Naive thymus-derived CD4-positive, alpha-beta T cell (primary cell): ENCODE measurements at regions of chr17 and their contacts with region 1.

Region 1: DNA sequence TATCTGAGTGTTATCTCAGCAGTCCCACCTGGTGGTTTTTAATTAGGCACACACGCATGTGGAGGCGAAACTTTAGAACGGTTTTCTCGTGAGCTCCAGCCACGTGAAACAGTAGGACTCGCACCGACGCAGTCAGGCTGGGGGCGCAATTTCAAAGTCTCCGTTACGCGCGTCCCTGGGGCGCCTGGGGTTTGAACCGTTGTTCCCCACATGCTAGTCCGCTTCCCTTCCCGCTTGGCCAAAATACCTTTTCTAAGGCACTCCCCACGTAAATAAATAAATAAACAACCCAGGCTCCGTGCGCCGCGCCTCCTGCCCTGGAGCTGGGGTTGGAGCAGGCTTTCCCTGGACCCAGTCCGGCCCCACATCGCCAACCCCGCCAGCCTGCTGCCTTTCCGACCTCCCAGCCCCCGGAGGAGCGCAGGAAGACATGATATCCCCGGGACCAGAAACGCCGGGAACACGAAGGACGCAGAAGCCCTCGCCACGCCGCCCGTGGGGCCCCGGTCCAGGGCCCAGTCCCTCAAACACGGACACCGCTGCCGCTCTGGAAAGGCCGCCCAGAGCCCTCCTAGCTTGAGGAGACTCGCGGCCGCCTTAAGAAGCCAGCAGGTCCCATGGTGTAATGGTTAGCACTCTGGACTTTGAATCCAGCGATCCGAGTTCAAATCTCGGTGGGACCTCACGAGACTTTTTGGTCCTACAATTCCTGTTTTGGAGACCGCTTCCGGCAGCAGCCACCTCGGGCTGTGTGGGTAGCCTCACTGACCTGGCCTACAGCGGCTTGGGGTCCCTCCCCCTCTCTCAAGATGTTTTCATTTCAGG is 18.2 kb downstream of the GNGT2 start:
- DNase-seq: peak in 8 of 9 donors; percentile 75 to 96 (median 94)
- ATAC-seq: peak; percentile 71
- H3K4me3 ChIP-seq: peak overlapping the region; percentile 88
- H3K4me3 Mint-ChIP-seq: peak overlapping the region; percentile 84 to 98 (median 95)
- H3K27ac ChIP-seq: peak overlapping the region; percentile 87
- H3K27ac Mint-ChIP-seq: peak overlapping the region; percentile 96 to 99 (median 98)
- H3K4me1 ChIP-seq: peaks cover 6% of the 10 kb centered on the region in 2 donors
- H3K4me1 Mint-ChIP-seq: peaks cover 16 to 57% (median 27%) of the 10 kb centered on the region in 7 donors
- H3K27me3 ChIP-seq: no peaks in the 10 kb centered on the region
- H3K27me3 Mint-ChIP-seq: peaks cover 0 to 6% (median 0%) of the 10 kb centered on the region in 5 donors

Region 2: GRCh38 chr17:48107168-48108132 is 1084.7 kb before region 1 on chr17 and contains the start of gene SNX11:
- CTCF ChIA-PET with region 1: no interaction called
- POLR2A ChIA-PET with region 1: no interaction called
- intact Hi-C with region 1: loop called in 1 of 2 experiments (anchors 10 kb)
- DNase-seq: peak; percentile 85 to 97 (median 94)
- ATAC-seq: peak; percentile 96
- H3K4me3 ChIP-seq: peak within 1 kb of the TSS; percentile 97
- H3K4me3 Mint-ChIP-seq: peak within 1 kb of the TSS; percentile 92 to 99 (median 96)
- H3K27ac ChIP-seq: peak within 1 kb of the TSS; percentile 89
- H3K27ac Mint-ChIP-seq: peak within 1 kb of the TSS; percentile 89 to 96 (median 93)
- H3K4me1 ChIP-seq: peaks cover 19 to 20% of the 10 kb centered on the region in 2 donors
- H3K4me1 Mint-ChIP-seq: peaks cover 45 to 68% (median 62%) of the 10 kb centered on the region in 7 donors
- H3K27me3 ChIP-seq: no peaks in the 10 kb centered on the region
- H3K27me3 Mint-ChIP-seq: no peaks in the 10 kb centered on the region
- total RNA-seq, gene SNX11: 12.3 to 35.1 (median 16.7) TPM

Region 3: DNA sequence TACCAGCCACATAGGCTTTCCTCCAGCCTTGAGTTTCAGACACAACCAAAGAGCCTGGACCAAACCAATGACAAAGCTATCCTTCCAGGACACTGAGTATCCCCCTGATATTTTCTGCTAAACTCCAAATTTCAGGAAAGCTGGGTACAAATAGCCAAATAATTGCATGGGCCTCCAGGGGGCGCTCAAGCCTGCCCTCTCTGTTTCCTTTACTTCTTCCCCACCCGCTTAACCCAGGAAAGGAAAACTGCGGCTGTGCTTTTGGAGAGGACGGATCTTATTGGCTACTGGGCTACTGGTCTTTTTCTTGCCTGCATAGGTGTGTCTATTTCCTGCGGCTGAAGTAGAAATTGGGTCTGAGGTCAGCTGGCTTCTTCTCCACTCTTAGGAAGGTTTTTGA is 11.8 kb before region 1 on chr17:
- CTCF ChIA-PET with region 1: interaction called, 23 read pairs
- POLR2A ChIA-PET with region 1: interaction called, 9 read pairs
- intact Hi-C with region 1: loop called (anchors 1 kb)
- DNase-seq: peak; percentile 38 to 67 (median 58)
- ATAC-seq: peak; percentile 69
- H3K4me3 ChIP-seq: no peak overlapping the region
- H3K4me3 Mint-ChIP-seq: peak overlapping the region in 3 of 10 donors; percentile 16 to 42 (median 21)
- H3K27ac ChIP-seq: no peak overlapping the region
- H3K27ac Mint-ChIP-seq: peak overlapping the region in 1 of 9 donors; percentile 41
- H3K4me1 ChIP-seq: peaks cover 4% of the 10 kb centered on the region in 2 donors
- H3K4me1 Mint-ChIP-seq: peaks cover 0 to 5% (median 4%) of the 10 kb centered on the region in 7 donors
- H3K27me3 ChIP-seq: peaks cover 0 to 4% of the 10 kb centered on the region in 2 donors
- H3K27me3 Mint-ChIP-seq: peaks cover 0 to 8% (median 2%) of the 10 kb centered on the region in 5 donors

Region 4: GRCh38 chr17:49217651-49218413 is 25.7 kb after region 1 on chr17:
- CTCF ChIA-PET with region 1: interaction called, 6 read pairs
- POLR2A ChIA-PET with region 1: interaction called, 237 read pairs
- intact Hi-C with region 1: loop called (anchors 1 kb)
- DNase-seq: peak; percentile 41 to 84 (median 79)
- ATAC-seq: peak; percentile 87
- H3K4me3 ChIP-seq: no peak overlapping the region
- H3K4me3 Mint-ChIP-seq: peak overlapping the region; percentile 78 to 94 (median 84)
- H3K27ac ChIP-seq: peak overlapping the region; percentile 70
- H3K27ac Mint-ChIP-seq: peak overlapping the region; percentile 81 to 99 (median 92)
- H3K4me1 ChIP-seq: peaks cover 64 to 72% of the 10 kb centered on the region in 2 donors
- H3K4me1 Mint-ChIP-seq: peaks cover 56 to 74% (median 65%) of the 10 kb centered on the region in 7 donors
- H3K27me3 ChIP-seq: no peaks in the 10 kb centered on the region
- H3K27me3 Mint-ChIP-seq: no peaks in the 10 kb centered on the region

Region 5: DNA sequence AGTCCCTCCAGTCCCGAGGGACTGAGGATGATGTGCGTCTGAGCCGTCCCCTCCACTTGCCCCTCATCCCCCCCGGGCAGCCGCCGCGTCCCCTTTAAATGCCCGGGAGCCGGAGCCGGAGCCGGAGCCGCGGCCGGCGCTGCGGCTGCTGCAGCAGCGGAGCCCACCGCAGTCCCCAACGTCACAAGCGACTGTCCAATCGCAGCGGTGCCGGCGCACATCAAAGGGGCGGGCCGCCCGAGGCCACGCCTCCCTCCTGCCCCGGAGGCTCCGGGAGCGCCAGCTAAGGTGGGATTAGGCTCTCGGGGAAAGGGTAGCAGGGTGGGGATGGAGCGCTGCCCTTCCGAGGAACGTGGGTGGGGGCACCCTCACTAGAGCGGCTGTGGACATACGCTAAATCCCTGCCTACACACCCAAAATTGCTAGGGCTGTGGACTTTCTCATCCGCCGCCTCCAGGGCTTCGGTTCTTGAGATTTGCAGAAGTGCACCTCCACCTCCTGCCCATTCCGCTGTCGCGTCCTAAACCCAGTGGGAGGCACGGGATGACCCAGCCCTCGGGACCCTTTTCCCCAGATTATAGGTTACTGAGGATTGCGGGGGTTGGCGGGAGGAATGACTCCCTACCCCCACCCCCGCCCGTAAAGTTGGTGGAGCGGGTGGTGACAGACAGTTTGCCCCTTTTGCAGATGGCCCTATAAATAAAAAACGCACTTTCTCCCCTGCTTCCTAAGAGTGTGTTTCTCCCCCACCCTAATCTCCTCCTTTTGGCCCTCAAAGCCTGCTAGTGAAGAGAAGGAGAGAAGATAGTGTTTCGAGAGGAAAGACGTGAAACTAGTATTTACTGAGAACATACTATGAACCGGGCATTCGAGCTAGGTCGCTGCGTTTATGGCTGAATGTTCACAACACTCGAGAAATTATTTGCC is 38.8 kb after region 1 on chr17 and contains the start of gene PHOSPHO1:
- CTCF ChIA-PET with region 1: interaction called, 67 read pairs
- POLR2A ChIA-PET with region 1: interaction called, 80 read pairs
- intact Hi-C with region 1: loop called (anchors 1 kb)
- DNase-seq: peak; percentile 70 to 88 (median 83)
- ATAC-seq: peak; percentile 97
- H3K4me3 ChIP-seq: peak within 1 kb of the TSS; percentile 62
- H3K4me3 Mint-ChIP-seq: peak within 1 kb of the TSS; percentile 81 to 94 (median 86)
- H3K27ac ChIP-seq: no peak within 1 kb of the TSS
- H3K27ac Mint-ChIP-seq: peak within 1 kb of the TSS in 7 of 9 donors; percentile 36 to 80 (median 52)
- H3K4me1 ChIP-seq: peaks cover 11 to 12% of the 10 kb centered on the region in 2 donors
- H3K4me1 Mint-ChIP-seq: peaks cover 0 to 26% (median 16%) of the 10 kb centered on the region in 7 donors
- H3K27me3 ChIP-seq: no peaks in the 10 kb centered on the region
- H3K27me3 Mint-ChIP-seq: peaks cover 0 to 43% (median 4%) of the 10 kb centered on the region in 5 donors
- total RNA-seq, gene PHOSPHO1: 0.17 TPM in 1 of 5 experiments, not detected in the others

Region 6: DNA sequence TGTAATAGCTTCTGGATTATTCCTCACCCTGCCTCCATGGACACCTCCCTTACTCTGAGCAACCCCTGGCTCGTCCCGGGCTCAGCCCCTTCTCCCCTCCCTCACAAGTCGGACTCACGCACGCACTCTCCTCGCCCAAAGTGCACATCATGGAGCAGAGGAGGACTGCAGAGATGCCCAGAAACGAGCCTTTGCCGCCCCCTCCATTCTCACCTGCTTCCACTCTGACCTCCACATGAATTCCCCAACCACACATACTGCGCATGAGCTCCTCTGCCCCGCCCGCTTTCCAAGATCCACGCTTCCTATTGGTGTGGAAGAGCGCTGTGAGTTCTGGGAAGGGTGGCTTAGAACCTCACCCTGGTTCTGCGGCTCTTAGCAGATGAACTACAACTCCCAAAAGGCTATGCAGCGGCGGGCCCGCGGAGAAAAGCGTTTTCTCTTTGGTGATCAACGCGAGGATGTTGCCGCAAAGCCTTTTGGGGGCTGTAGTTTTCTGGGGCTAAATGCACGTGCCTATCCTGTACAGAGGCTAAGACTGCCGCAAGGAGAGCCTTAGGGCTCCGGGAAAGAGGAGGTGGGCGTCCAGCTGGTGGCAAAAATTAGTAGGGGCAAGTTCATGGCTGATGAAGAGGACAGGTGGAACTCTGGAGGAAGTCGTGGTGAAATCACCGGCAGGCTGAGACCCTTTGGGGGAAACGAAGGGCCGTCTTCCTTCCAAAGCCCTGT is 222.7 kb after region 1 on chr17 and contains the start of gene PHB1:
- CTCF ChIA-PET with region 1: no interaction called
- POLR2A ChIA-PET with region 1: no interaction called
- intact Hi-C with region 1: loop called (anchors 1 kb)
- DNase-seq: peak; percentile 75 to 98 (median 93)
- ATAC-seq: peak; percentile 99
- H3K4me3 ChIP-seq: peak within 1 kb of the TSS; percentile 77
- H3K4me3 Mint-ChIP-seq: peak within 1 kb of the TSS; percentile 92 to 99 (median 96)
- H3K27ac ChIP-seq: peak within 1 kb of the TSS; percentile 77
- H3K27ac Mint-ChIP-seq: peak within 1 kb of the TSS; percentile 78 to 99 (median 92)
- H3K4me1 ChIP-seq: peaks cover 8% of the 10 kb centered on the region in 2 donors
- H3K4me1 Mint-ChIP-seq: peaks cover 11 to 30% (median 26%) of the 10 kb centered on the region in 7 donors
- H3K27me3 ChIP-seq: no peaks in the 10 kb centered on the region
- H3K27me3 Mint-ChIP-seq: peaks cover 0 to 3% (median 0%) of the 10 kb centered on the region in 5 donors
- total RNA-seq, gene PHB1: 50.0 to 186 (median 54.4) TPM

Region 7: DNA sequence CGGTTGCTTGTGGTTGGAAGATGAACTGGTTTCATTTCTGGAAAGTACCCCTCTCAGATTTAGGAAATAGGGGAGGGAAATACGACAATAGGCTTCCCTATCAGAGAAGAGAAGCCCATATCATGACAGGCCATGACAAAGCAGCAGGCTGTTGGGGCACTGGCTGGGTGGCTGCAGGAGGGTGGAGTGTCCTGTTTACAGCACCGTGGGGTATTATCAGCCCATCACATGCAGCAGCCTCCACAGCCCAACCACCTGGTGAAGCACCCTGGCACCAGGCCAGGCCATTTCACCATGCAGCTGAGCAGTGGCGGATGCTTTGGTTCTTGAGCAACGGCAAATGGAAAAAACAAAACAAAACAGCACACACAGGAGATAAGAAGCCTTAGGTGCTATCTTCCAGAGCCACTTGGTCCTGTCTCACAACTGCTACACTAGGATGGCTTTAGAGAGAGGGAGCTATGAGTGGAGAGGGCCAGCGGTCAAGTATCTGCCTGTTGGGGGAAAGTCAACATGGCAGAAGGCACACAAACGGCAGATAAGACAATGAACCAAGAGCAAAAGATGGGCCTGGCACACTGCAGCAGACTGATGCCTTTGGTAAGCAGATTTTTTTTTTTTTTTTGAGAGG is 547.6 kb after region 1 on chr17:
- CTCF ChIA-PET with region 1: no interaction called
- POLR2A ChIA-PET with region 1: no interaction called
- intact Hi-C with region 1: loop called in 1 of 2 experiments (anchors 10 kb)
- DNase-seq: peak; percentile 69 to 99 (median 98)
- ATAC-seq: peak; percentile 99
- H3K4me3 ChIP-seq: peak overlapping the region; percentile 67
- H3K4me3 Mint-ChIP-seq: peak overlapping the region; percentile 80 to 95 (median 90)
- H3K27ac ChIP-seq: peak overlapping the region; percentile 96
- H3K27ac Mint-ChIP-seq: peak overlapping the region; percentile 97 to 100 (median 99)
- H3K4me1 ChIP-seq: peaks cover 77 to 83% of the 10 kb centered on the region in 2 donors
- H3K4me1 Mint-ChIP-seq: peaks cover 62 to 97% (median 79%) of the 10 kb centered on the region in 7 donors
- H3K27me3 ChIP-seq: no peaks in the 10 kb centered on the region
- H3K27me3 Mint-ChIP-seq: no peaks in the 10 kb centered on the region